Activated naive CD4-positive, alpha-beta T cell treated with anti-CD3 and anti-CD28 coated beads, Interleukin-2, amount 10 ng/mL, durations not matched to agents 7 days and 5 days (primary cell): ENCODE measurements at regions of chr14 and their contacts with region 1.

Region 1: DNA sequence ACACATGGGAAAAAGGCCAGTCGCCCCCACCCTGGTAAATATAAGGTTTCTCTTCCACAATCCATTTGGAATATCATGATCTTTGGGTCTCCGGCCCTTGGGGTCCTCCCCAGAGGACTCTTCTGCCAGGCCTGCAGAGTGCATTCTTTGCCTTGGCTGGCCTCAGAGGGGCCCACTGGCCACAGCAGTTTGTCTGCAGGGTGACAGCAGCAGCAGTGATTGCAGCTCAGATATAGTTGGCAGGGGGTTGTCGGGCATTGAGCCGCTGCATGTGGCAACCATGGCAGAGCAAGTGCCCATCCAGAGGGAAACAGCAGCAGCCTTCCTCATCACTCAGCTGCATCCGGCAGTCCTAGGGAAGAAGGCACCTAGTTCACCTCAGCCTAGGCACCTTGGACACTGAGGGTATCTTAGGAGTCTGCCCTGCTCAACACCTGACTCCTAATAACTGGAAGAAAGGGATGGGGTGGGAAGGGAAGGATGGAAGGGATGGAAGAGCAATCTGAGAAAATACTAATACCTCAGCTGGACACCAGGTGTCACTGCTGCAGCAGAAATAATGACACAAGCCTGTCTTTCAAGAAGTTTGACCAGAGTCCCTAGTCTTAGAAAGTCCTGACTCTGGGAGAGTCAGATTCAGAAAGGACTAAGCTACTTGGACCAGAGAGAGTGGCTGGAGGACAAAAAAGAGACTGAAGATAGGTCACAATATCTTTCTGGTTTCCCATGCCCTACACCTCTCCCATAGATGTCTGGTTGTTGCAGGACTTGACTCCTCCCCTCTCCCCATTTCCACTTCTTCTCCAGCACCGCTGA is 8.9 kb downstream of the AJUBA start:
- DNase-seq: peak; percentile 60
- H3K4me3 Mint-ChIP-seq: no peak overlapping the region
- H3K27ac Mint-ChIP-seq: no peak overlapping the region
- H3K4me1 Mint-ChIP-seq: no peaks in the 10 kb centered on the region
- H3K27me3 Mint-ChIP-seq: peaks cover 12% of the 10 kb centered on the region

Region 2: DNA sequence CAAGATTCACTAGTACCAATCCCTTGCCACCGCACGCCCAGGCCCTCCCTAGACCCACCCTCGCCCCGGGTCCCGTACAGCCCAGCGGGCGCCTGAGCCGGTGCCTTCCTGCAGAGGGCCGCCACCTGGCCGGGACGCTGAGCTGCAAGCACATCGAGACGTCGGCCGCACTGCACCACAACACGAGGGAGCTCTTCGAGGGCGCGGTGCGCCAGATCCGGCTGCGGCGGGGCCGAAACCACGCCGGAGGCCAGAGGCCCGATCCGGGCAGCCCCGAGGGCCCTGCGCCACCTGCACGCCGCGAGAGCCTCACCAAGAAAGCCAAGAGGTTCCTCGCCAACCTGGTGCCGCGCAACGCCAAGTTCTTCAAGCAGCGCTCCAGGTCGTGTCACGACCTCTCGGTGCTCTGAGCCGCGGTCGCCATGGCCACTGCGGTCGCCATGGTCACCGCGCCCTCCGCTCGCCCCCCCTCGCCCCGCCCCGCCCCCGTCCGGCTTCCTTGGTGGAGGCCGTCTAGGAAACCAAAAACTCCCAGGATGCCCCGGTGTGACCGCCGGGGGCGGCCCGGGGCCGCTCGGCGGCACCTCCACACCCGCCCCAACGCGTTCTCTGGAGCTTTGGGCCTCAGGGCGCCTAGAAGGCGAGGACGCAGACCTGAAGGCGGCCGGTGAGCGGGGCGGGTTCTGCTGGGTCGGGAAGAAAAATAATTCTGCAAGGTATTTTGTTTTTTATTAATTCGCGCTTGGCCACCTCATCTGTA is 86.7 kb before region 1 on chr14:
- CTCF ChIA-PET with region 1: no interaction called
- DNase-seq: peak; percentile 86
- H3K4me3 Mint-ChIP-seq: peak overlapping the region; percentile 87
- H3K27ac Mint-ChIP-seq: peak overlapping the region; percentile 95
- H3K4me1 Mint-ChIP-seq: peaks cover 53% of the 10 kb centered on the region
- H3K27me3 Mint-ChIP-seq: peaks cover 47% of the 10 kb centered on the region

Region 3: GRCh38 chr14:22929104-22929847 is 44.1 kb before region 1 on chr14 and contains the start of gene PRMT5:
- CTCF ChIA-PET with region 1: interaction called, 16 read pairs
- DNase-seq: peak; percentile 99
- H3K4me3 Mint-ChIP-seq: no peak within 1 kb of the TSS
- H3K27ac Mint-ChIP-seq: no peak within 1 kb of the TSS
- H3K4me1 Mint-ChIP-seq: peaks cover 26% of the 10 kb centered on the region
- H3K27me3 Mint-ChIP-seq: no peaks in the 10 kb centered on the region

Region 4: DNA sequence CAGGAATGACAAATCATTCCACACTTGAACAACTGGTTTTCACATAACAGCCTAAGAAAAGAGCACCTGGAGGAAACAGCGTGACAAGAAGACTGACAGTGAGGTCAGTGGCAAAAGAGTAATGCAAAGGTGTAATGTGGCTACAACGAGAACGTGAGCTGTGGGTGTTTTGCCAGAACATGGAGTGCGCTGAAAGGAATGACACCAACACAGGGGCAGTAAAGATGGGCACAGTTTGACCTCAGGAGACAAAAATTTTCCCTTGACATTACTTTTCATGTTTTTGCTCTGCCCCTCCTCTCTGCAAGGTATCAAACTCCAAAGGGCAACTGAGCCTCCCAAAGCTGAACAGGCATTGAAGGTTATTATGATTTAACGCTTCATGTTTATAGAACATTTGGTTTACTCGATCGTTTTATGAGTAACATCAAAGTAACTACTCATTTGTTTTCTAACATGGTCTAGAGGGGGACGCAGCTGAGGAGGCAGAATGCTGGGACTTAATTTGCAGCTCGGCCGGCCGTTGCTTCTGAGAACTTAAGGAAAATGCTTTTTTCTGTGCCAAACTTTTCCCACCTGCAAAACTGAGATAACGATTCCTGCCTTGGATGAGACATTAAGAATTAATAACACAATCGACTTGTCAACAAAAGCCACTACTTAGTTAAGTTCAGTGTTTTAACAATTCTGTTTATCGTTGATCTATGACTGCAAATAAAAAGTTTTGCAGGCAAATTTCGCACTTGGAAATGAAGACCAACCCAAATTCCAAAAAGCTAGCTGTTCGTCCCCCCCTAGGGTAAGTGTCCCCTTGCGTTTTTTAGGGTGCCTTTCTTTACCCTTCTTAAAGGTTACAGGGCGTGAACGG is 17.5 kb before region 1 on chr14:
- CTCF ChIA-PET with region 1: interaction called, 54 read pairs
- DNase-seq: no peak
- H3K4me3 Mint-ChIP-seq: peak overlapping the region; percentile 91
- H3K27ac Mint-ChIP-seq: peak overlapping the region; percentile 92
- H3K4me1 Mint-ChIP-seq: peaks cover 30% of the 10 kb centered on the region
- H3K27me3 Mint-ChIP-seq: peaks cover 4% of the 10 kb centered on the region

Region 5: GRCh38 chr14:22962061-22962676 is 11.3 kb before region 1 on chr14:
- CTCF ChIA-PET with region 1: interaction called, 54 read pairs
- DNase-seq: no peak
- H3K4me3 Mint-ChIP-seq: no peak overlapping the region
- H3K27ac Mint-ChIP-seq: no peak overlapping the region
- H3K4me1 Mint-ChIP-seq: peaks cover 7% of the 10 kb centered on the region
- H3K27me3 Mint-ChIP-seq: peaks cover 11% of the 10 kb centered on the region

Region 6: DNA sequence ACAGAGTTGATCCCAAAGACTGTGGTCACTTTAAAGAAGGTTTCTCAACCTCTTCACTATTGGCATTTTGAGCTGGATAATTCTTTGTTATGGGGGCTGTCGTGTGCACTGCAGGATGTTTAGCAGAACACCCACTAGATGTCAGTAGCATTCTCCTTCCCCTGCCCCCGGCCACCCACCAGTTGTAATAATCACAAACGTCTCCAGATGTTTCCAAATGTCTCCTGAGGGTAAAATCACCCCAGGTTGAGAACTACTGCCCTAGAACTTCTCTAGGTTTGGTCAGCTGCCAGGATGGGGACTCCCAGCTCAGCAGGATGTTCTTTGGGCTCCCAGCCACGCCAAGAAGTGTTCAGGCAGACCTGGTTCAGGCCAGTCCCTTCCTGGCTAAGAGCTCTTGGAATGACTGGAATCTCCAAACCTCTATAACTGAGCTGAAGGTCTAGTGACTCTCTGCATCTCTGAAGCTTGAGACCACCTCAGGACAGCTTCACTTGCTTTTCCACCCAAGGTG is 21.4 kb after region 1 on chr14:
- CTCF ChIA-PET with region 1: interaction called, 33 read pairs
- DNase-seq: peak; percentile 48
- H3K4me3 Mint-ChIP-seq: no peak overlapping the region
- H3K27ac Mint-ChIP-seq: no peak overlapping the region
- H3K4me1 Mint-ChIP-seq: no peaks in the 10 kb centered on the region
- H3K27me3 Mint-ChIP-seq: no peaks in the 10 kb centered on the region

Region 7: DNA sequence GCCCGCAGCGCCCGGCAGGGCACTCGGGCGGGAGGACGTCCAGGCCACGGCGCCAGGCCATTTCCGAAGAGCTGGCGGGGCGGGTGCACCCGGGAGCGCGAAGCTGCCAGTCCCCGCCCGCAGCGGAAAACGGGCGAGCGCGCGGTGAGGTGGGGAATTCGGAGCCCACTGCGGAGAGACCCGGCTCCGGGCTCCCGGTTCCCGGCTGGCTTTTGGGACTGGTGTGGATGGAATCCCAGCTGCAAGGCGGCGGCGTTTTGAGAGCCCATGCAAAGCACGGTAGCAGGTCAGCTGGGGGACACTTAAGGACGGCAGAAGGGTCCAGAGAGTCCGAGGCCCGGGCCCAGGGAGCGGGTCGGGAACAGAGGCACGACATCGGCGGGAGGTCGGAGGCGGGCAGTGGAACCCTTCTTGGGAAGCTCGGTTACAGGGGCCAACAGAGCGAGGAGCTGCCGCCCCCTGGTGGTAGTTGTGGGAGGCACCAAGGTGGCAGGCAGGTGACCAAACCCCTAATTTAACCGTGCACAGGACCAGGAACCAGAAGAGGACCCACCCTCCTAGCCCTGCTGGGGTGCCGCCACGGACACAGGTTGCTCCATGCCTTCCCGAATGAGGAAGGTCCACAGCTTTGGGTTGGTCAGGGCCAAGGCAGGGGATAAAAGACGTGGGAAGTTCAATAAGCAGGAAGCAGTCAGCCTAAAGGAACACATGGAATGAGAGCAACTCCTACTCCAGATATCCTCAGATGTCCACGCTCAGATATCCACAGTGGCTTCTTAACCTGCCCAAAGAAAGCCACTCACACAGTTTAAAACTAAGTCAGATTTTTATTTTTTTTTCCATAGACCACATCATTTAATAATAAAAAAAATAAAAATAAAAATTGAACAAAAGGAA is 84.6 kb after region 1 on chr14:
- CTCF ChIA-PET with region 1: interaction called, 30 read pairs
- DNase-seq: peak; percentile 92
- H3K4me3 Mint-ChIP-seq: peak overlapping the region; percentile 83
- H3K27ac Mint-ChIP-seq: peak overlapping the region; percentile 71
- H3K4me1 Mint-ChIP-seq: peaks cover 21% of the 10 kb centered on the region
- H3K27me3 Mint-ChIP-seq: peaks cover 25% of the 10 kb centered on the region